GM12878 (cell line): ENCODE measurements at regions of chr1 and their contacts with region 1.

Region 1: DNA sequence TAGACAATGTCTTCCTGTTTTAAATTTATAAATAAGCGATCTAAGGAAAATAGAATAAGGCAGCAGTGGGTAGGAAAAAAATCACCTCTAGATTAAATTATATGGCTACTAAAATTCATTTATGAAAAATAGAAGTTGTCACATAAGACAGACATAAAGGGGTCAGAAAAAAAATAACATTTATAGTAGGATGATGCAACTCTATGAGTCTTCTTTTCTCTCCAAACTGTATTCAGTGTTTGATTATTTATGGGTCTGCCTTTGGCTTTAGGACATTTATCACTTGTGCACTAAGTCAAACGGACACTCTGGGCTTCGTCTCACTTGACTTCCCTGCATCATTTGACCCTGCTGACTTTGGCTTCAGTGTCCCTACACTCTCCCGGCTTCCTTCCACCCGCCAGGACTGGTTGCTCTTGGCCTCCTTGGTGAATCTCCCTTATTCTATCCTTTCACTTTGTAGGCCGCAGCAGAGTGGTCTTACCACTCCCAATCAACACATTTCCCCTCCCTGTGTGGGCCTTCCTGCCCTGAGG is 47.0 kb upstream of the DESI2 start:
- DNase-seq: no peak
- ATAC-seq: no peak
- H3K4me3 ChIP-seq: no peak overlapping the region
- H3K27ac ChIP-seq: no peak overlapping the region
- H3K4me1 ChIP-seq: no peaks in the 10 kb centered on the region
- H3K27me3 ChIP-seq: no peaks in the 10 kb centered on the region
- CTCF ChIP-seq: no peak
- EP300 ChIP-seq: no peak
- POLR2A ChIP-seq: no peak
- RAD21 ChIP-seq: no peak

Region 2: DNA sequence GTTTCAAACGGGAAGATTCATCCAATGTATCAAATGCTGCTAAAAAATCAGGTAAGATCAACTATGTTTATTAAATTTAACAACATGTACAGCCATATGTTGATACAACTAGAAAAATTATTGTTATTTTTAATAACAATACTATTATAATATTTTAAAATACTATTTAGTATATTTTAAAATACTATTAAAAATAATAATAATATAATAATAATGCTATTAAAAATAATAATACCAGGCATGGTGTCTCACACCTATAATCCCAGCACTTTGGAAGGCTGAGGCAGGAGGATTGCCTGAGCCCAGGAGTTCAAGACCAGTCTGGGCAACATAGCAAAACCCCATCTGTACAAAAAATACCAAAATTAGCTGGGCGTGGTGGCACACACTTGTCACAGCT is 90.2 kb before region 1 on chr1:
- CTCF ChIA-PET with region 1: no interaction called
- POLR2A ChIA-PET with region 1: no interaction called
- RAD21 ChIA-PET with region 1: no interaction called
- SMC1A ChIA-PET with region 1: no interaction called
- in situ Hi-C with region 1: no loop called
- intact Hi-C with region 1: no loop called
- DNase-seq: no peak
- ATAC-seq: no peak
- H3K4me3 ChIP-seq: no peak overlapping the region
- H3K27ac ChIP-seq: no peak overlapping the region
- H3K4me1 ChIP-seq: no peaks in the 10 kb centered on the region
- H3K27me3 ChIP-seq: no peaks in the 10 kb centered on the region
- CTCF ChIP-seq: no peak
- EP300 ChIP-seq: no peak
- POLR2A ChIP-seq: no peak
- RAD21 ChIP-seq: no peak

Region 3: DNA sequence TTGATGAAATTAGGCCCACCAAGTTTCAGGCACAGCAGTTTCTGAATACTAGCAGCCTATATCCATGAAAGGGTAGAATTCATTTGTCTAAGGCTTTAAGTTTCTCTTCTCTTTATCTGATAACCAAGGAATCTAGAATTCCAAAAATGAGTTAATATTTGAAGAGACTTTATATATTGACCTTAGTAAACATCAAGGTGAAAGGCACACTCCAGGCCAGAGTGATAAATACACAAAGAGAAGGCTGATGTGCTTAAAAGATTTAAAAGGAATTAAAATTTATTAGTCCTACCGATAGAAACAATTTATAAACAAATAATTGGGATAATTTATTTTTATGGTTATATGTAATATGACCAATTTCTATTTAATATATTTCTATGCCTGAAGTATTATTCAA is 46.4 kb before region 1 on chr1:
- CTCF ChIA-PET with region 1: no interaction called
- POLR2A ChIA-PET with region 1: no interaction called
- RAD21 ChIA-PET with region 1: no interaction called
- SMC1A ChIA-PET with region 1: no interaction called
- in situ Hi-C with region 1: no loop called
- intact Hi-C with region 1: no loop called
- DNase-seq: no peak
- ATAC-seq: no peak
- H3K4me3 ChIP-seq: no peak overlapping the region
- H3K27ac ChIP-seq: no peak overlapping the region
- H3K4me1 ChIP-seq: no peaks in the 10 kb centered on the region
- H3K27me3 ChIP-seq: no peaks in the 10 kb centered on the region
- CTCF ChIP-seq: no peak
- EP300 ChIP-seq: no peak
- POLR2A ChIP-seq: no peak
- RAD21 ChIP-seq: no peak

Region 4: DNA sequence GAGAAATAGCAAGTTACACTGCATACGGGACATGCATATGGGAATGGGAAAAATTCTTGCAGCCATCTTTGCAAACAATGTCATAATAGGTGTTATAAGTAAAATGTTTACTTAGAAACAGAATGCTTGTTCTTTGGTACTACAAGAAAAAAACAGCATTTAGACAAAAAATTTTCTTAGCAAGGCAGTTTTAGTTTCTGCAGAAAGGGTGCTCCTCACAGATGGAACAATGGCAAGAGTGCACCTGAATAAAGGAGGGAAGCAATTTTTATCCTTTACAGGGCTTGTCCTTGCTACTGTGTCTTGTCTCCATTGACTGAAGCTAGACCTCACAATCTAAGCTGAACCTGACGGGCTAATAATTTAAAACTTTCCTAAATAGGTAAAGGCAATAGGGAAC is 32.1 kb before region 1 on chr1:
- CTCF ChIA-PET with region 1: no interaction called
- POLR2A ChIA-PET with region 1: no interaction called
- RAD21 ChIA-PET with region 1: no interaction called
- SMC1A ChIA-PET with region 1: no interaction called
- in situ Hi-C with region 1: no loop called
- intact Hi-C with region 1: no loop called
- DNase-seq: no peak
- ATAC-seq: no peak
- H3K4me3 ChIP-seq: no peak overlapping the region
- H3K27ac ChIP-seq: no peak overlapping the region
- H3K4me1 ChIP-seq: no peaks in the 10 kb centered on the region
- H3K27me3 ChIP-seq: no peaks in the 10 kb centered on the region
- CTCF ChIP-seq: no peak
- EP300 ChIP-seq: no peak
- POLR2A ChIP-seq: no peak
- RAD21 ChIP-seq: no peak

Region 5: GRCh38 chr1:244652699-244653466 is 47.0 kb after region 1 on chr1 and contains the start of gene DESI2:
- CTCF ChIA-PET with region 1: interaction called, 5 read pairs
- POLR2A ChIA-PET with region 1: no interaction called
- RAD21 ChIA-PET with region 1: interaction called, 4 read pairs
- SMC1A ChIA-PET with region 1: interaction called, 4 read pairs
- in situ Hi-C with region 1: loop called (anchors 5 kb)
- intact Hi-C with region 1: no loop called
- DNase-seq: peak; percentile 96
- ATAC-seq: peak; percentile 95
- H3K4me3 ChIP-seq: peak within 1 kb of the TSS; percentile 91
- H3K27ac ChIP-seq: peak within 1 kb of the TSS; percentile 71
- H3K4me1 ChIP-seq: no peaks in the 10 kb centered on the region
- H3K27me3 ChIP-seq: no peaks in the 10 kb centered on the region; a peak in 1 of 4 replicates
- CTCF ChIP-seq: peak; percentile 40 to 51 (median 46); a peak in 5 of 6 replicates
- EP300 ChIP-seq: 0 out of 4 replicates have a peak, but pooled peaks of 1 of the 2 experiments have one; percentile 2
- POLR2A ChIP-seq: peak; percentile 96
- RAD21 ChIP-seq: no peak
- polyA plus RNA-seq, gene DESI2: 6.2 to 7.0 TPM

Region 6: GRCh38 chr1:244779410-244779809 is 173.5 kb after region 1 on chr1:
- CTCF ChIA-PET with region 1: no interaction called
- POLR2A ChIA-PET with region 1: no interaction called
- RAD21 ChIA-PET with region 1: no interaction called
- SMC1A ChIA-PET with region 1: no interaction called
- in situ Hi-C with region 1: no loop called
- intact Hi-C with region 1: no loop called
- DNase-seq: no peak
- ATAC-seq: no peak
- H3K4me3 ChIP-seq: no peak overlapping the region
- H3K27ac ChIP-seq: no peak overlapping the region
- H3K4me1 ChIP-seq: no peaks in the 10 kb centered on the region
- H3K27me3 ChIP-seq: peaks cover 0 to 1% of the 10 kb centered on the region in 2 experiments; a peak in 2 of 4 replicates
- CTCF ChIP-seq: no peak
- EP300 ChIP-seq: no peak
- POLR2A ChIP-seq: no peak
- RAD21 ChIP-seq: no peak